Upper lobe of right lung (tissue), 1 donor: ENCODE measurements at regions of chr2 and their contacts with region 1.

Region 1: DNA sequence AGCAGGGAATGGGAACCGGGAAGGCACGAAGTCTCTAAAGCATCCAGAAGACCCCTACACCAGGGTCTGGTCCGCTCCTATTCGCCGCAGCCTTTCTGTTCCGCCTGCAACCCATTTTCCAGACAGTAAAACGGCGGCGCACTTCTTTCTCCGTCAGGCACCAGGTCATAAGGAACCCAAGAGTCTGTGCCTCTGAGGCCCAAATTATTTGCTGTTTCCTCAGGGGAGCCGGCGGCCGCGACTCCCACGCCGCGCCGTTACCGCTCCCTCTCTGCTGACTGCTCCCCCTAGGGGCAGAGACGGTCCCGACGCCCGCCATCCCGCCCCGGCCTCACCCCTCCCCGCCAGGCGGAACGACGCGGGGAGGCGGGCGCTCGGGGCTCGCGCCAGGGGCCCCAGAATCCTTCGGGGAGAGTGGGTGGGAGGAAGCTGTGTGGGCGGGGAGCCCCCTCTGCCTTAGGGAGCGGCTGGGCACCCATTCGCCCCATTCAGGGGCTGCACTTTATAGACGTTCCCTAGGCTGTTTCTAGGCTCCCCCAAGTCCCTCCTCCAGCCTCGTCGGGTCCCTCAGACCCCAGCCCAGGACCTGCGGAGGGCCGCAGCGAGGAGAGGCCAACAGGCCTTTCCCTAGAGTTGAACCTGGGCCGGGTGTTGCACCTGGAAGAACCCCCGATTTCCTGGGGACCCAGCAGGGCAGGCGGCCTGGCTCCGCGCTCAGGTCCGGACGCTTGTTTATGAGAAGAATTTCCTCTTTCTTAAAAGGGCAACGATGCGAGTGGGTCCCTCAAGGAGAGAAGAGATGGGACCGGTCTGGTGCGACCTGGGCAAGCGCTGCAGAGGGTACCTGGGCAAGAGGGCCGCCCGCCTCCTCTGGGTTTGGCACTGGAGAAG is 3.6 kb upstream of the CTDSP1 start:
- DNase-seq: peak; percentile 97
- ATAC-seq: peak; percentile 69
- H3K4me3 ChIP-seq: peak overlapping the region; percentile 79
- H3K27ac ChIP-seq: peak overlapping the region; percentile 100
- H3K4me1 ChIP-seq: peaks cover 20% of the 10 kb centered on the region
- H3K27me3 ChIP-seq: no peaks in the 10 kb centered on the region
- CTCF ChIP-seq: peak; percentile 83

Region 2: DNA sequence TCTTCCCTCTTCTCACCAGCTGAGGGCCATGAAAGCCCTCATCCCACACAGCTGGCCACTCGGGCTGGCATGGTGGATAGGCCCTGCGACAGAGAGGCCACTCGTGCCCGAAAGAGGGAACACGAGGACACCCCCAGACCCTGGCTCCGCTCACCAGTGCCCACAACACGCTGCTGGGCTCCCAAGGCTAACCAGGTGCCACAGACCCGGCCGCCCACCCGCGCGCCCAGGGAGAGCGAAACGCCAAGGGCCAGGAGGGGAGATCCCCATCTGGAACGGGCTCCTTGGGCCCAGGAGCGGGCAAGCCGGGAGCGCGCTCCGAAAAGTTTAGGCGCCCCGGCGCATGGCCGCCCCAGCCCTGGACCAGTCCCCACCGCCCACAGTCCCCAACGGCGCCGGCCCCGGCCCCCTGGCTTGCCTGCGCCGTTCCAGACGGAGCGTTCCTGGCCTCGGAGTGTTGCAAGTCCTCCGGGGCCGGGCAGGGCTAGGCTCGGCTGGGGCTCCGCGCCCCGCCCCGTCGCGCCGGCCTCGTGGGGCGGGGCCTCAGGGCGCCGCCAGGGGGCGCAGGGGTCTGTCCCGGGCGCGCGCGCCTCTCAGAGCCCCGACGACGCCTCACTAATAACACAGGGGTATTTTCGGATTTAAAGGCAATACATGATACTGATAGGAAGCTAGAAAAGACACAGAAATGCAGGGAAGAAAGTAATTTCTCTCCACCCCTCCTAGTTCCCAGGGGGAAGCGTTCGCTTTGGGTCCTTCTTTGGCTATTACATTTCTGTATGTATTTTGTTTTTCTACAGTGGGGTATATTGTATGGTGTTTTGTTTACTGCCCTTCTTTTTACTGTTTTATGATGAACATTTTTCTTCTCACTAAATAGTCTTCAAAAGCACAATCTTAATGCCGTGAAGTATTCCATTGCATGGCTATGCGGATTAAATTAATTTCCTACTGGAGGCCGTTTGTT is 103.7 kb before region 1 on chr2 and contains the start of gene TMBIM1:
- intact Hi-C with region 1: loop called (anchors 10 kb)
- DNase-seq: peak; percentile 93
- ATAC-seq: peak; percentile 93
- H3K4me3 ChIP-seq: peak within 1 kb of the TSS; percentile 89
- H3K27ac ChIP-seq: peak within 1 kb of the TSS; percentile 98
- H3K4me1 ChIP-seq: peaks cover 72% of the 10 kb centered on the region
- H3K27me3 ChIP-seq: no peaks in the 10 kb centered on the region
- CTCF ChIP-seq: peak; percentile 81
- total RNA-seq, gene TMBIM1: 281 TPM